Ovary (tissue), 10 donors: ENCODE measurements at regions of chr11 and their contacts with region 1.

Region 1: DNA sequence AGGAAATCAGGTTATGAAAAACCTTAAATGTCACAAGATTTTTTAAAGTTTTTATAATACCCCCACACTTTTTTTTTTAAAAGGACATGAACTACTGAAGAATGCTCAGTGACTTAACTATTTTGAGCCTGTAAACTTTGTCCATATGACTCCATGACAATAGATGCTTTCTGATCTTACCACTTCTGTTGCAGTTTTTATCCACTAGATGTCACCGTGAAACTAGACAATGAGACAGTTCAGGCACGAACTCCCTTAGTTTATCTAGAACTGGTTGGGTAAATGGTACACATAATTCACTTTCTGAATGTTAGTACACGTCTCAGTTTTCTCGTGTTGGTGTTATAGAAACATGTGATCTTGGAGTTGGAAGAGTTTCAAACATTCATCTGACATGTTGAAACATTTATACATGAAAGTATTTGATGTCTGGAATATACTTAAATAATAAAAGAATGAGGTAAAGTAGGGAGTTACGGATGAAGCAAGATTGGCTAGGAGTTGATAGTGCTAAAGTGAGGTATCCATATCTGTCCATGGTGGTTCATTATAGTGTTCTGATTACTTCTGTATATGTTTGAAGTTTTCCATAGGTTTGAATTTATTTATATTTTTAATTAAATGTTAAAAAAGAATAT is 8.1 kb downstream of the CCDC15 start:
- DNase-seq: no peak
- H3K4me3 ChIP-seq: no peak overlapping the region
- H3K27ac ChIP-seq: no peak overlapping the region
- H3K4me1 ChIP-seq: no peaks in the 10 kb centered on the region
- H3K27me3 ChIP-seq: no peaks in the 10 kb centered on the region
- CTCF ChIP-seq: peak in 2 of 3 donors; percentile 40 to 53
- EP300 ChIP-seq: no peak
- POLR2A ChIP-seq: no peak

Region 2: GRCh38 chr11:124861670-124862069 is 100.4 kb before region 1 on chr11:
- intact Hi-C with region 1: no loop called
- DNase-seq: peak in 1 of 5 donors; percentile 17
- H3K4me3 ChIP-seq: no peak overlapping the region
- H3K27ac ChIP-seq: no peak overlapping the region
- H3K4me1 ChIP-seq: peaks cover 9% of the 10 kb centered on the region
- H3K27me3 ChIP-seq: no peaks in the 10 kb centered on the region
- CTCF ChIP-seq: no peak
- EP300 ChIP-seq: no peak
- POLR2A ChIP-seq: no peak

Region 3: GRCh38 chr11:125154378-125155099 is 192.4 kb after region 1 on chr11:
- intact Hi-C with region 1: loop called in 1 of 4 experiments (anchors 10 kb)
- DNase-seq: no peak
- H3K4me3 ChIP-seq: no peak overlapping the region
- H3K27ac ChIP-seq: no peak overlapping the region
- H3K4me1 ChIP-seq: no peaks in the 10 kb centered on the region
- H3K27me3 ChIP-seq: no peaks in the 10 kb centered on the region
- CTCF ChIP-seq: no peak
- EP300 ChIP-seq: no peak
- POLR2A ChIP-seq: no peak

Region 4: GRCh38 chr11:125376117-125376516 is 414.0 kb after region 1 on chr11:
- intact Hi-C with region 1: no loop called
- DNase-seq: peak; percentile 47 to 72 (median 69)
- H3K4me3 ChIP-seq: no peak overlapping the region
- H3K27ac ChIP-seq: peak overlapping the region in 1 of 2 donors; percentile 4
- H3K4me1 ChIP-seq: peaks cover 4% of the 10 kb centered on the region
- H3K27me3 ChIP-seq: no peaks in the 10 kb centered on the region
- CTCF ChIP-seq: no peak
- EP300 ChIP-seq: no peak
- POLR2A ChIP-seq: no peak

Region 5: DNA sequence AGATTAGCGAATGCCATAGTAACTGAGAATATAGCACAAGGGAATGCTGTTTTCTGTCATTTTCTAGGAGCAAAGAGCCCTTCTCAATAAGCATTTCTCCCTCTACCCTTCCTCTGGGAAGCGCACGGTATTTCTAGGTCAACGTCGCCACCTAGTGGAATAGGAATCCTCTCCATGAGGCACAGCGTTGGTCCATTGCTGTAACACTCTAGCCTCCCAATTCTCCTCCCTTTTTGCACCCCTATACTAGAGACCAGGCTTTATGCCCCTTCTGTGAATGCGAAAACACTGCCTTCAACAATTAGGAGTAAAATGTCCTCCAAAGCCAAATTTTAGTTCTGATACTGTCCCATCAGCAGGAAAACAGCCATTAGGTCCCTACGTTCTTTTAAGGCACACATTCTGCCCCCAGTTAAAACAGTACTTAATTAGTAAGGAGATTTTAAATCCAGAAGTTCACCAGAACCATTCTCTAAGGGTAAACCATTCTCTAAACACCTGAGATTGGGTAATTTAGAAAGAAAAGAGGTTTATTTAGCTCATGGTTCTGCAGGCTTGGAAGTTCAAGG is 912.5 kb after region 1 on chr11:
- intact Hi-C with region 1: loop called in 1 of 4 experiments (anchors 5 kb)
- DNase-seq: peak in 4 of 5 donors; percentile 40 to 67 (median 55)
- H3K4me3 ChIP-seq: no peak overlapping the region
- H3K27ac ChIP-seq: no peak overlapping the region
- H3K4me1 ChIP-seq: no peaks in the 10 kb centered on the region
- H3K27me3 ChIP-seq: no peaks in the 10 kb centered on the region
- CTCF ChIP-seq: peak; percentile 41 to 62 (median 60)
- EP300 ChIP-seq: no peak
- POLR2A ChIP-seq: no peak